K562 (cell line): ENCODE measurements at regions of chr12 and their contacts with region 1.

Region 1: GRCh38 chr12:1576410-1577241 is 17.8 kb downstream of the FBXL14 start:
- DNase-seq: peak in 3 of 4 experiments; percentile 18 to 80 (median 56)
- ATAC-seq: peak; percentile 80
- H3K4me3 ChIP-seq: 0 out of 2 replicates have a peak overlapping the region, but pooled peaks have one; percentile 3
- H3K27ac ChIP-seq: peak overlapping the region; percentile 68; the same call in 2 of the 3 replicates
- H3K4me1 ChIP-seq: peaks cover 18 to 26% of the 10 kb centered on the region in 2 experiments; a peak in 4 of 5 replicates
- H3K27me3 ChIP-seq: no peaks in the 10 kb centered on the region
- CTCF ChIP-seq: no peak; a peak in 1 of 6 replicates
- EP300 ChIP-seq: peak; percentile 77
- POLR2A ChIP-seq: no peak
- RAD21 ChIP-seq: peak in 1 of 2 experiments; percentile 48; a peak in 3 of 4 replicates

Region 2: DNA sequence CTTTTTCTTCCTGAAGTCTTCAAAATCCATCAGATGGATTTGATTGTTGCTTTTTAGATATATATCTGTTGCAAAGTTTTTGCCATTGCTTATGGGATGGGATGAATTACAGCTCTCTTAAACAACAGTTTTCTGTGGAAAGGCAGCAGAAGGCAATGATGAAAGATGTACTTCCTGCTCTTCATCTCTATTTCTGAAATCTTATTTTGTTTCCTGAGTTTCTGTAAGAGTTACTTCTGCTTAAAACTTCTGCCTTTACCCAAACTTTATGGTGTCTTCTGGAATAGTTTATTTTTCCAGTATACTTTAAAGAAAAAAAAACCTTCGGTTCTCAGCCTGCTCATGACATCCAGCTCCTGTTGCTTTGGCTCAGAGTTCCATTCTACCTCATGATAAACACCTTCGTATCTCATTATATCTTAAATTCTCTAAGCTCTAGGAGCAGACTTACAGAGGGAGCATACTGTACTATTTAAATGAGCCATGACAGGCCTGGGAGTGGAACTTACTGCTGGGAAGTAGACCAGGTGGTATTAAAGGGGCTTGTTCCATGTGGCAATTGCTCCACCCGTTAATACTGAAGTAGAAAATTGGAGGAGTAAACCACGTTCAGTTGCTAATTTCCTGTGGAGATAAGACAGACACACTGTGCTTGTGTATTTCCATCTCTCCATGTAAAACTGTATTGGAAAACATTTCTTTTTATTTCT is 270.7 kb before region 1 on chr12:
- CTCF ChIA-PET with region 1: no interaction called
- POLR2A ChIA-PET with region 1: no interaction called
- in situ Hi-C with region 1: no loop called
- intact Hi-C with region 1: no loop called
- DNase-seq: peak in 2 of 4 experiments; percentile 14 to 28
- ATAC-seq: peak; percentile 30
- H3K4me3 ChIP-seq: no peak overlapping the region
- H3K27ac ChIP-seq: peak overlapping the region; percentile 95
- H3K4me1 ChIP-seq: peaks cover 12 to 35% of the 10 kb centered on the region in 2 experiments
- H3K27me3 ChIP-seq: no peaks in the 10 kb centered on the region
- CTCF ChIP-seq: no peak
- EP300 ChIP-seq: no peak
- POLR2A ChIP-seq: no peak
- RAD21 ChIP-seq: no peak

Region 3: GRCh38 chr12:1517007-1517406 is 59.6 kb before region 1 on chr12:
- CTCF ChIA-PET with region 1: no interaction called
- POLR2A ChIA-PET with region 1: interaction called, 4 read pairs
- in situ Hi-C with region 1: no loop called
- intact Hi-C with region 1: loop called (anchors 10 kb)
- DNase-seq: no peak
- ATAC-seq: peak; percentile 43; the same call in 1 of the 3 replicates
- H3K4me3 ChIP-seq: no peak overlapping the region
- H3K27ac ChIP-seq: no peak overlapping the region
- H3K4me1 ChIP-seq: peaks cover 8 to 11% of the 10 kb centered on the region in 2 experiments; a peak in 4 of 5 replicates
- H3K27me3 ChIP-seq: no peaks in the 10 kb centered on the region
- CTCF ChIP-seq: peak; percentile 15 to 51 (median 31); a peak in 3 of 6 replicates
- EP300 ChIP-seq: no peak
- POLR2A ChIP-seq: no peak
- RAD21 ChIP-seq: no peak

Region 4: GRCh38 chr12:1533602-1534304 is 42.9 kb before region 1 on chr12:
- CTCF ChIA-PET with region 1: no interaction called
- POLR2A ChIA-PET with region 1: interaction called, 3 read pairs
- in situ Hi-C with region 1: no loop called
- intact Hi-C with region 1: loop called (anchors 5 kb)
- DNase-seq: peak in 2 of 4 experiments; percentile 21 to 26
- ATAC-seq: peak; percentile 9; the same call in 2 of the 3 replicates
- H3K4me3 ChIP-seq: no peak overlapping the region
- H3K27ac ChIP-seq: no peak overlapping the region
- H3K4me1 ChIP-seq: peaks cover 11 to 34% of the 10 kb centered on the region in 2 experiments
- H3K27me3 ChIP-seq: no peaks in the 10 kb centered on the region
- CTCF ChIP-seq: no peak
- EP300 ChIP-seq: no peak
- POLR2A ChIP-seq: no peak
- RAD21 ChIP-seq: no peak